ENCODE measurements at regions of chr6 and their contacts with region 1.

Region 1: DNA sequence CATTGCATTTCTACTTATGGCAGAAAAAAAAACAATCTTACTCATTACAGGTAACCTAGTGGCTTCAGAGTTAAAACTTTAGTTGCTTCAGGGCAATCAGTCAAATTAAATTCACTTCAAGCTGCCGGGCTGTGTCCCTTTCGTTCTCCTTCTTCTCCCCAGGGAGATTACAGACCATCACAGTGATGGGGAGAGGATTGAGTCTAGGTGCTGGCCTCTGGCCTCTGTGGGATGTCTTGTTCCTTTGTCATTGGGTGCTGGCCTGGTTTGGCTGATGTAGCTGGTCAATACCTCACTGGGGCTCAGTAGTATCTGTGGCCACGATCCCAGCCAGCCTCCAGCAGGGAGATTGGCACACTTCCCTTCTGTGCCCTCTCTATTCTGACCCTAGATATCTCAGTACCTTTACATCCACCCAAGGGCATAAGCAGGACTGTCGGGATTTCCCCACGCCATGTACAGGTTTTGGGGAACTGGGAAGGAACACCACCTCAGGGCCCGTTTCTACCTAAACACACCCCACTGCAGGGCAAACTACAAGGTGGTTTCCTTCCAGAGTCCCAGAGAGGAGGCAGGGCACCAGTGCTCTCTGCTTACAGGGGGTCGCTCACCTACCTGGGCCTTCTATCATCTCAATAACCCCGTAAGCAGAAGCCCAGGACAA is 15.4 kb downstream of the FYN start:
- DNase-seq: no peak
- H3K4me3 Mint-ChIP-seq: no peak overlapping the region
- H3K27ac Mint-ChIP-seq: peak overlapping the region; percentile 28
- H3K4me1 Mint-ChIP-seq: peaks cover 92% of the 10 kb centered on the region
- H3K27me3 Mint-ChIP-seq: no peaks in the 10 kb centered on the region

Region 2: DNA sequence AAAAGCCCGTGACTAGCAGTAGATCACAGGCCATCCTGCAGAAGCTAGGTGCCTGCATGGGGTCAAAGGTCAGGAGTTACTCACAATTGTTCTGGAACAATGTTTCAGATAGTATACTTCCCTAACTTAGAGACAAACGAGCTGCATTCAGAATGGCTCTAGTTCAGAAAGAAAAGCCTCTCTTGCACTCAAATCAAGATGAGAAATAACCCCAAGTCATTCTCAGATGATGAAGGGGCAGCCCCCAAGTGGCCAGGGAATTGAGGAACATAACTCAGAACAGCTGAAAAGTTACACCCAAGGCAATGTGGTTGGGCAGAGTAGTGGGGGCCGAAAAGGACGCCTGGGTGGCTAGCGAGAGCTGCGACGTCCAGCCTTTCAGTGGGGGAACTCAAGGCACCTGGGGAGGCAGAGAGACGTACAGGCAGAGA is 12.3 kb before region 1 on chr6:
- CTCF ChIA-PET with region 1: interaction called, 23 read pairs
- POLR2A ChIA-PET with region 1: interaction called, 3 read pairs
- DNase-seq: no peak
- H3K4me3 Mint-ChIP-seq: no peak overlapping the region
- H3K27ac Mint-ChIP-seq: no peak overlapping the region
- H3K4me1 Mint-ChIP-seq: peaks cover 15% of the 10 kb centered on the region
- H3K27me3 Mint-ChIP-seq: no peaks in the 10 kb centered on the region

Region 3: DNA sequence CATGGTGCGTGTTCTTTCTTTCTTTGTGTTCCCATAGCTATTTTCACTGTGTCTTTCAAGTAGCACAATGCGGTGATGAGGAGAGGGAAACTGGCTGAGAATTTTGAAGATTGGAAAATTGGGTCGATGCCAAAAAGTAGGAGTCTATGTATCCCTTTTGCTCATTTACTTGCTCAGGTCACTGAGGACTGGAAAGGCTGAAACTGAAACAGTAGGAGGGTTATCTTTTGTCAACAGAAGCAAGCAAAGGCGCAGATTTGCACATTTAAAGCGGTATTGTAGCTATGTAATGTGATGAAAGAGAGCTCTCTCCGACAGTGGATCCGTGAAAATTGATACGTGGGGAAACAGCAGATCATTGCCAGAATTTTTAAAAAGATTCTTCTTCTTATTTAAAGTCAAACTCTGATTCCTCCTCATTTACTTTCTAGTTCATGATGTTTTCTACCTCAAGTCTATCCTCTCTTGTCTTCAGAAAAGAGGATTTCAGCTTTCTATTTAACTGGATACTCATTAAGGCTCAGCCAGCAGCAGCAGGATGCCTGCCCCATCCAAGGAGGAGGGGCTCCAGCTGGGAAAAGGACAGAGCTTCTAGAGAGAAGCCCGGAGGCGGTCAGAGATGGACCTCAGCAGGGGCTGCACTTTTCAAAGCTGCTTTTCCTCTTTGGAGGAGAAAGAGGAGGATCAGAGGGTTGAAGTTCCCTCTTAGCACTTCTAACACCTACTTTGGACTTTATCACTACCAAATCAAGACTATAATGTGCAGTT is 31.3 kb after region 1 on chr6:
- CTCF ChIA-PET with region 1: no interaction called
- POLR2A ChIA-PET with region 1: no interaction called
- DNase-seq: no peak
- H3K4me3 Mint-ChIP-seq: no peak overlapping the region
- H3K27ac Mint-ChIP-seq: no peak overlapping the region
- H3K4me1 Mint-ChIP-seq: no peaks in the 10 kb centered on the region
- H3K27me3 Mint-ChIP-seq: peaks cover 3% of the 10 kb centered on the region